WTC11 (cell line): ENCODE measurements at regions of chr3 and their contacts with region 1.

Region 1: GRCh38 chr3:4271834-4272233 is 31.3 kb upstream of the SETMAR start:
- DNase-seq: no peak
- ATAC-seq: peak; percentile 83
- H3K4me3 Mint-ChIP-seq: no peak overlapping the region
- H3K27ac Mint-ChIP-seq: no peak overlapping the region
- H3K4me1 Mint-ChIP-seq: no peaks in the 10 kb centered on the region; the same call in 1 of the 2 replicates
- H3K27me3 Mint-ChIP-seq: peaks cover 13% of the 10 kb centered on the region; the same call in 1 of the 2 replicates
- CTCF ChIP-seq: peak; percentile 29; the same call in 1 of the 2 replicates

Region 2: GRCh38 chr3:3998140-3998922 is 273.5 kb before region 1 on chr3:
- CTCF ChIA-PET with region 1: interaction called, 10 read pairs
- POLR2A ChIA-PET with region 1: no interaction called
- DNase-seq: peak; percentile 19
- ATAC-seq: peak; percentile 76
- H3K4me3 Mint-ChIP-seq: no peak overlapping the region
- H3K27ac Mint-ChIP-seq: no peak overlapping the region
- H3K4me1 Mint-ChIP-seq: no peaks in the 10 kb centered on the region
- H3K27me3 Mint-ChIP-seq: no peaks in the 10 kb centered on the region
- CTCF ChIP-seq: peak; percentile 61

Region 3: DNA sequence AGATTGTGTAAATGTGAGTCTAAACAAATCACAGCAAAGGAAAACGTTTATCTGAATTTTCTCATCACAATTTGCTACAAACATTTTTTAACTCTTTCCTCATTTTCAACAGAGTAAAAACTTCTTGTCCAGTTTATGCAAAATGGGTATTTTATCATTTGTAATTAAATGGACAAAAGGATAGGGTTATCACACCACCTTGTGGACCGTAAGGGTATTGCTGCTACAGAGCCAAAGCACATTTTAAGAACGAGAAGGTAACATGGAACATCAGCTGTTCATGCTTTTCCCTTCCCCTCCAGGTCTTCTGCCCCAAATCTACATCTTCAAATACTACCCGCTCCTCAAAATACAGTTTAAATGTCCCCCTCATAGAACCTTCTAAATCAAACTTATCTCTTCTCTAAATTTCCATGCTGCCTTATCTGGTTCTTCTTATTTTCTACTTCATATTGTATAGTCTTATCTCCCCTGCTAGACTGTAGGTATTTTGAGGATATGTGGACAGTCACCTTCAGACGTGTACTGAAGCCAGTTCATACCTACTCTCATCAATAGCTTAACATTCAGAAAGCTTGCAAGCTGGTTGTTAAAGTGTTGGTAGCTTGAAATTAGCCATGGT is 18.5 kb after region 1 on chr3:
- CTCF ChIA-PET with region 1: interaction called, 12 read pairs
- POLR2A ChIA-PET with region 1: no interaction called
- DNase-seq: no peak
- ATAC-seq: peak; percentile 61; the same call in 1 of the 2 replicates
- H3K4me3 Mint-ChIP-seq: no peak overlapping the region
- H3K27ac Mint-ChIP-seq: no peak overlapping the region
- H3K4me1 Mint-ChIP-seq: peaks cover 3% of the 10 kb centered on the region; the same call in 1 of the 2 replicates
- H3K27me3 Mint-ChIP-seq: 0 out of 2 replicates have a peak, but pooled peaks cover 2% of the 10 kb centered on the region
- CTCF ChIP-seq: peak; percentile 81